Left ventricle myocardium inferior (tissue), 1 donor: ENCODE measurements at regions of chr11 and their contacts with region 1.

Region 1: GRCh38 chr11:8225589-8226036 is 38.1 kb downstream of the LMO1 start:
- DNase-seq: peak; percentile 67
- H3K4me3 ChIP-seq: no peak overlapping the region
- H3K27ac ChIP-seq: no peak overlapping the region
- H3K4me1 ChIP-seq: peaks cover 17% of the 10 kb centered on the region
- H3K27me3 ChIP-seq: peaks cover 2% of the 10 kb centered on the region
- CTCF ChIP-seq: peak; percentile 93

Region 2: DNA sequence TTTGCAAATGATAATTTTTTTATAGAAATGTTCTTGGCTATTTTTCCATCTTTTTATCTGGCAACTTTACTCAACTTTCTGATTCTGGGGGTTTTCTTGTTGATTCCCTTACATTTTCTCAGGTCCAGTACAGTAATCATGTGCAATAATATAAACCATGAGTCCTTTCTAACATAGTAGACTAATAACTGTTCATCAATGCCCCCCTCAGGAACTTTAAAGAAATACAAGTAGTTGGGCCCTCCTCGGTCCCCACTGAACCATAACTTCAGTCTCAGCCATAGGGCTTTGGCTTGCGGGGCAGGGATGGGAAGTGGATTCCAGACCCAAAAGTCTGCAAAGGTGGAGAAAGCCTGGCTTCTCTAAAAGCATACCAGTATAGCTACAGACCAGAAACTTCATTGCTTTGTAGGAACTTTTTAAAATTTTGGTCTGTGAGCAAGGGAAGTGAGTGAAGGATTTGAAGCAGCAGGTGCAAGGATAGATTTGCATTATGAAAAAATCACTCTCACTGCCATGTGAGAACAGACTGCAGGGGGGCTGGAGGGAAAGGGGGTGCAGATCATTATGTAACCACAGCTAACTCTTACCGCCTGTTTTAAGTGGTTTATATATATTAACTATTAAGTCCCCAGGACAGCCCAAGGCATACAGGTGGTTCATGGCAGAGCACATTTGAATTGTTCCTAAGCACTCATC is 155.0 kb before region 1 on chr11:
- intact Hi-C with region 1: no loop called
- DNase-seq: no peak
- H3K4me3 ChIP-seq: no peak overlapping the region
- H3K27ac ChIP-seq: no peak overlapping the region
- H3K4me1 ChIP-seq: peaks cover 51% of the 10 kb centered on the region
- H3K27me3 ChIP-seq: no peaks in the 10 kb centered on the region
- CTCF ChIP-seq: peak; percentile 62

Region 3: DNA sequence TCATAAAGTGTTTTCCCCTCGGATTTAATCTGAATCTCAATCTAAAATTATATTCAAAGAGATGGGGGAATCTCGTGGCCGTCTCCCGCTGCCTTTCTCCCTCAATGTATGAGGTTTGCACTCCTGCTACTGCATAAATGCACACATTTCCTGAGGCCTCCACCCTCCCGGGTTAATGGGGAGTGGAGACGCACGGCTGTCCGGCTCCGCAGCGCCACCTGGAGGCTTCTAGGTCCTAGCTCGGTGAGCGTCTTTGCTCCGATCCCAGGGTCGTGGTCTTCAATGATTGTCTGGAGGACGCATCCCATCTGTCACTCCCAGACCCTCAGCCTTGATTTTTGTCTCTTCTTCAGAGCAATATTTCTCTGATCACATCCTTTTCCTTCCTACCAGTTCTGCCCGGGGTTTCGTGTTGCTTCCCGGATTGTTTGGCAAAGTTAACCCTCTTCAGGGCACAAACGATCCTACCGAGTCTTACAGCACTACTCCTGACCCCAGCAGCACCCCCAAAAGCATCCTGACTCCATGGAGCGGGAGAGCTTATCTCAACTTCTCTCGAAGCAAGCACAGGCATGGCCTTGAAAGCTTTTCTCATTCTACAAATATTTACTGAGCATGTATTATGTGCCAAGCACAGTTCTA is 38.3 kb after region 1 on chr11 and contains the start of gene LMO1:
- intact Hi-C with region 1: no loop called
- DNase-seq: peak; percentile 78
- H3K4me3 ChIP-seq: peak within 1 kb of the TSS; percentile 70
- H3K27ac ChIP-seq: peak within 1 kb of the TSS; percentile 27
- H3K4me1 ChIP-seq: peaks cover 37% of the 10 kb centered on the region
- H3K27me3 ChIP-seq: peaks cover 92% of the 10 kb centered on the region
- CTCF ChIP-seq: peak; percentile 89
- total RNA-seq, gene LMO1: 2.3 TPM

Region 4: DNA sequence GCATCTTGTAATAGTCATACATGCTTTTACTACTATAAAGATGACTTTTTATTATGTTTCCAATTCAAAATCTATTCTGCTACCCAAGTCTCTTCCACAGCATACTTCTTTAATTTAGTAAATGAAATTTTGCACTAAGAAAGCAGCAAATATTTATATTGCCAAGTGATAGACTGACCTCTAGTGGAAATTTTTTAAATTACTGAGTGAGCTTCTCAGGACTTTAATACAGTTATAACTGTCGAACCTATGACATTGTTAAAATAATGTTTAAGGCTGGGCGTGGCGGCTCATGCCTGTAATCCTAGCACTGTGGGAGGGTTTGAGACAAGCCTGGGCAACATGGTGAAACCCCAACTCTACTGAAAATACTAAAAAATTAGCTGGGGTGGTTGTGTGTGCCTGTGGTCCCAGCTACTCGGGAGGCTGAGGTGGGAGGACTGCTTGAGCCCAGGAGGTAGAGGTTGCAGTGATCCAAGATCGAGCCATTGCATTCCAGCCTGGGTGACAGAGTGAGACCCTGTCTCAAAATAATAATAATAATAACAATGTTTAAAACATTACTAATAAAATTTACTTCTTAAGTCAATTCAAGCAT is 341.1 kb after region 1 on chr11:
- intact Hi-C with region 1: loop called (anchors 2 kb)
- DNase-seq: no peak
- H3K4me3 ChIP-seq: no peak overlapping the region
- H3K27ac ChIP-seq: no peak overlapping the region
- H3K4me1 ChIP-seq: no peaks in the 10 kb centered on the region
- H3K27me3 ChIP-seq: peaks cover 17% of the 10 kb centered on the region
- CTCF ChIP-seq: peak; percentile 80